ENCODE measurements at regions of chr7 and their contacts with region 1.

Region 1: DNA sequence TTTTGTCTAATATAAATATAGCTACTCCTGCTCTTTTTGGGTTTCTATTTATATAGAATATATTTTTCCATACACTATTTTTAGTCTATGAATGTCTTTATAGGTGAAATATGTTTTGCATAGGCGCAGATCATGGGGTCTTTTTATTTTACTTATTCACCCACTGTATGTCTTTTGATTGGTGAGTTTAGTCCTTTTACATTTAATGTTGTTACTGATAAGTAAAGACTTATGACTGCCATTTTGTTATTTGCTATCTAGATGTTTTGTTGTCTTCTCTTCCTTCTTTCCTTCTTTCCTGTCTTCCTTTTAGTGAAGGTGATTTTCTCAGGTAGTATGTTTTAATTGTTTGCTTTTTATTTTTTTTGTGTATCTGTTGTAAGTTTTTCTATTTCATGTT is 276.8 kb upstream of the CNTNAP2 start:
- DNase-seq: no peak
- H3K4me3 Mint-ChIP-seq: no peak overlapping the region
- H3K27ac Mint-ChIP-seq: no peak overlapping the region
- H3K4me1 Mint-ChIP-seq: no peaks in the 10 kb centered on the region
- H3K27me3 Mint-ChIP-seq: no peaks in the 10 kb centered on the region
- CTCF ChIP-seq: no peak

Region 2: GRCh38 chr7:145899938-145900337 is 60.1 kb after region 1 on chr7:
- CTCF ChIA-PET with region 1: no interaction called
- POLR2A ChIA-PET with region 1: no interaction called
- intact Hi-C with region 1: loop called (anchors 2 kb)
- DNase-seq: no peak
- H3K4me3 Mint-ChIP-seq: no peak overlapping the region
- H3K27ac Mint-ChIP-seq: no peak overlapping the region
- H3K4me1 Mint-ChIP-seq: no peaks in the 10 kb centered on the region
- H3K27me3 Mint-ChIP-seq: no peaks in the 10 kb centered on the region
- CTCF ChIP-seq: no peak